ENCODE measurements at regions of chr2 and their contacts with region 1.

Region 1: DNA sequence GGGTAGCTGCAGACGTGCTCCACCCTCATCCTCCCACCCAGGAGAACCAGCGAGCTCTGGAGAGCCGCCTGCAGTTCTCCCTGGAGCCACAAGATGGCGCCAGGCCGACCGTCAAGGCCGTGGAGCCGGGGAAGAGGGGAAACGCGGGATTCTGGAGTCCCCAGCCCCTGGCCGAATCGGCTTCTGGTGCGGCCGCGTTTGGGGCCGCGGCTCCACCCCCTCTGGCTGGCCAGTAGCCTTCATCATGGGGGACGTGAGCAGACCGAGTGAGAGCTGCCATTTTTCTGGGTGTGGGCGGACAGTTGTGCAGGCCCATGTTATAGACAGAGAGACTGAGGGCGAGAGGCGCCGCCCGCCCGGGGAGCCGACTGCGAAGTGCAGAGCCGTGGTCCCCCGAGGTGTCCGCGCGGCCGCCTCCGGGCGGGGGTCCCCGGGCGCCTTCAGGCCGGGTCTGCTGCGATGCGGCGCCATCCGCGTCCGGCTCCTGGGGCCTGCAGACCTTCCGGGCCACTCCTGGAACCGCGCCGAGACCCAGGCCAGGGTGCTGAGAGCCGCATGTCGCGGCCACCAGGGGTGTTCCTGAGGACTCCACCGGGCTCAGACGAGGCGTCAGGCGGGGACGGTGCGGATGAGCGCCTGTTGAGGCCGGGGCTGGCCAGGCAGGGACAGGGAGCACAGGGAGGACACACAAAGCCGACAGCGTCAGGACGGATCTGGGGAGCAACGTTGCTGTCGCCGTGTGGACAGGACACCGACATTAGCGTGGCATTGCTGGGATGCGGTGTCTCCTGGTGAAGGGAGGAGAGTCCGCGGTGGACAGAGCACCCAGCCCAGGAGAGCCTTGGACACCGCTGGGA is 418.2 kb upstream of the HS6ST1 start:
- DNase-seq: peak; percentile 78
- ATAC-seq: peak; percentile 80 to 87

Region 2: GRCh38 chr2:128774320-128775216 is 37.7 kb after region 1 on chr2:
- intact Hi-C with region 1: no loop called
- DNase-seq: no peak
- ATAC-seq: peak; percentile 62 to 71

Region 3: GRCh38 chr2:129253461-129253812 is 516.5 kb after region 1 on chr2:
- intact Hi-C with region 1: loop called in 1 of 2 experiments (anchors 10 kb)
- DNase-seq: peak; percentile 27
- ATAC-seq: peak in 1 of 2 donors; percentile 71